OCI-LY7 (cell line): ENCODE measurements at regions of chr22 and their contacts with region 1.

Region 1: GRCh38 chr22:39703928-39704639 is 133.5 kb downstream of the CACNA1I start:
- DNase-seq: no peak
- H3K4me3 ChIP-seq: no peak overlapping the region
- H3K27ac ChIP-seq: no peak overlapping the region
- H3K4me1 ChIP-seq: no peaks in the 10 kb centered on the region
- CTCF ChIP-seq: no peak

Region 2: GRCh38 chr22:39984006-39984405 is 279.9 kb after region 1 on chr22:
- CTCF ChIA-PET with region 1: no interaction called
- POLR2A ChIA-PET with region 1: interaction called, 10 read pairs
- intact Hi-C with region 1: no loop called
- DNase-seq: no peak
- H3K4me3 ChIP-seq: no peak overlapping the region
- H3K27ac ChIP-seq: no peak overlapping the region
- H3K4me1 ChIP-seq: no peaks in the 10 kb centered on the region
- CTCF ChIP-seq: no peak

Region 3: GRCh38 chr22:40009292-40009769 is 305.2 kb after region 1 on chr22:
- CTCF ChIA-PET with region 1: no interaction called
- POLR2A ChIA-PET with region 1: no interaction called
- intact Hi-C with region 1: no loop called
- DNase-seq: no peak
- H3K4me3 ChIP-seq: no peak overlapping the region
- H3K27ac ChIP-seq: no peak overlapping the region
- H3K4me1 ChIP-seq: no peaks in the 10 kb centered on the region
- CTCF ChIP-seq: no peak